MCF 10A (cell line): ENCODE measurements at regions of chr9 and their contacts with region 1.

Region 1: GRCh38 chr9:92634712-92635605 is 35.0 kb downstream of the IPPK start:
- DNase-seq: peak; percentile 67
- H3K4me3 Mint-ChIP-seq: no peak overlapping the region
- H3K27ac Mint-ChIP-seq: no peak overlapping the region
- H3K4me1 Mint-ChIP-seq: no peaks in the 10 kb centered on the region
- H3K27me3 Mint-ChIP-seq: no peaks in the 10 kb centered on the region
- CTCF ChIP-seq: peak; percentile 90

Region 2: DNA sequence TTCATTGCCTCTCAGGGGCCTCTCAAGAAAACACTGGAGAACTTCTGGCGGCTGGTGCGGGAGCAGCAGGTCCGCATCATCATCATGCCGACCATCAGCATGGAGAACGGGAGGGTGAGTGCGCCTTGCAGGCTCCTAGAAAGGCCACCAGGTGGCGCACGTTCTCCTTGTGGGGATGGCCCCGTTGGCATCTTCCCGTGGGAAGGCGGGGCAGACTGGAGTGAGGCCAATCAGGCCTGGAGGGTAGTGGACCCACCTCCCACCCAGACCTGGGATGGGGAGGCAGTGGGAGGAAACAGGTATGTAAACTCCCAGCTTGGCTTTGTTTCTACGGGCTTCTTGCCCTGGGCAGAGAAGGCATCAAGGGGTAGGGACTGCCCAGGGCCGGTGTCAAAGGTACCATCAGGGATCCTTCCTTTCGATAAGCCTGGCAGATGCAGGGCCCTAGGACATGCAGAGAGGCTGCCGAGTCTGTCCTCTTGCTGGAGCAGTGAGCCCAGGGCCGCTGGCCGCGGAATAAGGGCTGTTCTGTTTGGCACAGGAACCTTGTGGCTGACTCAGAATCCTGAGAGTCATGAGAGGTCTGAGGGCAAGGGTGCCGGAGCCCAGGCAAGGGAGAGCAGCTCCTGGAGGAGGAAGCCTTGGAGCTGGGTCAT is 500.9 kb before region 1 on chr9:
- CTCF ChIA-PET with region 1: interaction called, 5 read pairs
- POLR2A ChIA-PET with region 1: no interaction called
- intact Hi-C with region 1: loop called (anchors 10 kb)
- DNase-seq: peak; percentile 82
- H3K4me3 Mint-ChIP-seq: peak overlapping the region; percentile 66
- H3K27ac Mint-ChIP-seq: no peak overlapping the region
- H3K4me1 Mint-ChIP-seq: peaks cover 9% of the 10 kb centered on the region
- H3K27me3 Mint-ChIP-seq: peaks cover 13% of the 10 kb centered on the region
- CTCF ChIP-seq: peak; percentile 96

Region 3: DNA sequence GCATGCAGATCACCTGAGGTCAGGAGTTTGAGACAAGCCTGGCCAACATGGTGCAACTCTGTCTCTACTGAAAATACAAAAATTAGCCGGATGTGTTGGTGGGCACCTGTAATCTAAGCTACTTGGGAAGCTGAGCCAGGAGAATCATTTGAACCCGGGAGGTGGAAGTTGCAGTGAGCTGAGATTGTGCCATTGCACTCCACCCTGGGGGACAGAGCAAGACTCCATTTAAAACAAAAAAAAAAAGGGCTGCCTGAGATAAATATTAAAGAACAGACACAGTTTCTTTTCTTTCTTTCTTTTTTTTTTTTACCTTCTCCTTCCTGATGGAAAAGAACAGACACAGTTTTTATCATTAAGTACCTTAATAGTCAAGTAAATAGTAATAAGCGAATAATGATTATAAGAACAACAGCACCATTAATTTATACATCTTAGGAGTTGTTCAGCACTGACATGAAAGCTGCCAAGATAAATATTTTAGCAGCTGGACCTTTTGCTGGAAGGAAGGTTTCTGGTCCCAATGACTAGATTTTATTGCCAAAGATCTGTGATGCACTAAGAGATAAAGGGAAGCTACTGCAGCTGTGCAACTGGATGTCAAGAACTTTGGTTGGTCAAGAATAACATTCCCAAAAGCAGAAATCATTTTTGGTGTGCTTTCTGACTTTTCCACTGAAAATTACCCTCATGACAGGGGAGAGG is 302.2 kb before region 1 on chr9:
- CTCF ChIA-PET with region 1: interaction called, 46 read pairs
- POLR2A ChIA-PET with region 1: interaction called, 4 read pairs
- intact Hi-C with region 1: loop called (anchors 1 kb)
- DNase-seq: no peak
- H3K4me3 Mint-ChIP-seq: no peak overlapping the region
- H3K27ac Mint-ChIP-seq: peak overlapping the region; percentile 13
- H3K4me1 Mint-ChIP-seq: peaks cover 17% of the 10 kb centered on the region
- H3K27me3 Mint-ChIP-seq: no peaks in the 10 kb centered on the region
- CTCF ChIP-seq: no peak

Region 4: DNA sequence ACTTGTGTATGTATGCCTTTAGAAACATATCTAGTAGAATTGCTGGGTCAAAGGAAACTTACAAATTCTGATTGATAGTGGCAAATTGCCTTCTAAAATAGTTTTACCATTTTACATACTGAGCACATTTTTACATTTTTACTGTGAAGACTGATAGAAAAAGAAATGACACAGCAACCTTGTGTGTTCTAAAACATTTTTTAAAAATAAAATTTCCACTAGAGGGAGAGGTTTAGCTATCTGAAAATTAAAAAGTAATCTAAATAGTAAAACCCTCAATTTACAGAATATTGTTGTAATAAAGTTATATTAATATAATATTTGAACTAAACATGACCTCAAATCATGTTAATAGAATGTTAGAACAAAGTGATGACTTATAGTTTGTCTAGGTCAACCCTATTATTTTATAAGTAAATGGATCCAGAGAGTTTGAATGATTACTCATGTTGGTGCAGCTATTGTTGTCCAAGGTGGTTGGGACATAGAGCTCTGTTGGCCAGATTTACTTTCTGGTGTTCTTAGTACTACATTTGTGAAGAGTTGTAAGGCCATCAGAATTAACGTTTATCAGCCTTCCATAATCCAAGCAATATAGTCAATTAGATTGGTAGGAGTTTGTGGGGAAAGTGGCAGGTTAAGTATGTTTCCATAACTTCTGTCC is 292.0 kb before region 1 on chr9:
- CTCF ChIA-PET with region 1: interaction called, 24 read pairs
- POLR2A ChIA-PET with region 1: interaction called, 3 read pairs
- intact Hi-C with region 1: loop called (anchors 1 kb)
- DNase-seq: no peak
- H3K4me3 Mint-ChIP-seq: no peak overlapping the region
- H3K27ac Mint-ChIP-seq: peak overlapping the region; percentile 48
- H3K4me1 Mint-ChIP-seq: no peaks in the 10 kb centered on the region
- H3K27me3 Mint-ChIP-seq: no peaks in the 10 kb centered on the region
- CTCF ChIP-seq: peak; percentile 32

Region 5: DNA sequence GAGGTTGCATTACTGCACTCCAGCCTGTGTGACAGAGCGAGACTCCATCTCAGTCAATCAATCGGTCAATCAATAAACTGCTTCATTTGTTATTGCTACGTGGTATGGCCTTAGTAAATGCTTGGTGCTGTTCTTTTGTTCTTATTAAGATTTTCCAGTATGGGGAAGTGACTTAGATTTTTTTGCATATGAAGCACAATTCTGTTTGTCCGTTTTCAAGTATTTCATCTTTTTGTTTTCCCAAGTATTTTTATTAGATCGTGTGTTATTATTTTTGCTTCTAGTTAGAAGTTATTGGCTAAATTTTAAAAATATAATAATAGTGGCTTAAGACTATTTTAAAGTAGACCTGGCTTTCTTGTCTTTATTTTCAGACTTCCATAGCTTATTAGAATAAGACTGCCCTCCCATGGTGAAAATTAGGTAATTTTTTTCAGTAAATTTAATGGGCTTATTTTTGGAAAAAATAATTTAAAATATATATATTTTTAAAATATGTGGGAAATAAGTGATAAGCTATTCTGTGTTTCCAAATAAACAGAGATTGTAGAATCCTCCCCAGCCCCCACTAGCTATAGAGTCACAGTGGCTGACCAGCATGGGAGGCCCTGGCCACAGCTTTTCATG is 195.9 kb before region 1 on chr9:
- CTCF ChIA-PET with region 1: interaction called, 7 read pairs
- POLR2A ChIA-PET with region 1: no interaction called
- intact Hi-C with region 1: loop called (anchors 1 kb)
- DNase-seq: peak; percentile 9
- H3K4me3 Mint-ChIP-seq: no peak overlapping the region
- H3K27ac Mint-ChIP-seq: peak overlapping the region; percentile 68
- H3K4me1 Mint-ChIP-seq: peaks cover 7% of the 10 kb centered on the region
- H3K27me3 Mint-ChIP-seq: no peaks in the 10 kb centered on the region
- CTCF ChIP-seq: peak; percentile 50

Region 6: DNA sequence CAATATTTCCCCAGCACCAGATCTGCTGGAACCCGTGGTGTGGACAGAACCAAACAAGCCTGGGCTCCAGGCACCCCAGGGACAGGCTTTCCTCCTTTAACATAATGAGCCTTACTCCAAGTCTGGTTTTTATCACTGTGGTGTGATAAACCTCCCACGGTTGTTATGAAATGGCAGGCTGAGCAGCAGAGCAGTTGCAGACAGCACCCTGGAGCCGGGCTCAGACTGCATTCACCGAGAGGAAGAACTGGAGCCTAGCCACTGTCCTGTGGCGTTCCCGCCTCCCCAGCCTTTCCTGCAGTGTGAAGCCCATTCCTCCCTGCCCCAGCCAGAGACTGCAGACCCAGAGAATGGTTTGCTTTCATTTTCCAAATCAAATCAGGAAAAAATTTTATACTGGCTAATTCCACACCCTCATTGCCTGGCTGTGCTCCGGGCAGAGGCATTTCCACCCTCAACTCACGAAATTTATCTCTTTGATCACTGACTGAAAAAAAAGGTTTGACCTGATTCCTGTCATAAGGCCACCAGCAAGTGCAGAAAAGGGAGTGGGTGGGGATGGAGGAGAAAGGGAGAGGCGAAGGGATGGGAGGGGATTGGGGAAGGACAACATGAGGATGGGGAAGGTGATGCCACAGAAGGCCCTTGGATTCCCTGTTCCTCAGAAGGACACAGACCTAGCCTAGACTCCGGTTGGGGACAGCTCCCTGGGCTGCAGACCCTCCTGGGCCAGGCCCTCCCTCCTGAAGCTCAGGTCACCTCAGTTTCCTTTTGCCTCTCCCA is 16.1 kb after region 1 on chr9:
- CTCF ChIA-PET with region 1: interaction called, 15 read pairs
- POLR2A ChIA-PET with region 1: no interaction called
- intact Hi-C with region 1: no loop called
- DNase-seq: no peak
- H3K4me3 Mint-ChIP-seq: no peak overlapping the region
- H3K27ac Mint-ChIP-seq: peak overlapping the region; percentile 78
- H3K4me1 Mint-ChIP-seq: peaks cover 28% of the 10 kb centered on the region
- H3K27me3 Mint-ChIP-seq: no peaks in the 10 kb centered on the region
- CTCF ChIP-seq: no peak